Activated naive CD4-positive, alpha-beta T cell treated with anti-CD3 and anti-CD28 coated beads for 36 hours (primary cell): ENCODE measurements at regions of chr21 and their contacts with region 1.

Region 1: GRCh38 chr21:44299458-44300261 is at the start of gene PFKL:
- DNase-seq: peak; percentile 64
- H3K4me3 Mint-ChIP-seq: peak within 1 kb of the TSS; percentile 78
- H3K27ac Mint-ChIP-seq: peak within 1 kb of the TSS; percentile 87
- H3K4me1 Mint-ChIP-seq: peaks cover 54% of the 10 kb centered on the region
- H3K27me3 Mint-ChIP-seq: no peaks in the 10 kb centered on the region
- total RNA-seq, gene PFKL: 166 to 171 TPM

Region 2: GRCh38 chr21:44353191-44353970 is 53.7 kb after region 1 on chr21 and contains the start of gene TRPM2:
- CTCF ChIA-PET with region 1: interaction called, 4 read pairs
- intact Hi-C with region 1: loop called (anchors 5 kb)
- DNase-seq: peak; percentile 48
- H3K4me3 Mint-ChIP-seq: peak within 1 kb of the TSS; percentile 40
- H3K27ac Mint-ChIP-seq: peak within 1 kb of the TSS; percentile 44
- H3K4me1 Mint-ChIP-seq: peaks cover 49% of the 10 kb centered on the region
- H3K27me3 Mint-ChIP-seq: peaks cover 4% of the 10 kb centered on the region
- total RNA-seq, gene TRPM2: 2.5 to 3.5 TPM

Region 3: DNA sequence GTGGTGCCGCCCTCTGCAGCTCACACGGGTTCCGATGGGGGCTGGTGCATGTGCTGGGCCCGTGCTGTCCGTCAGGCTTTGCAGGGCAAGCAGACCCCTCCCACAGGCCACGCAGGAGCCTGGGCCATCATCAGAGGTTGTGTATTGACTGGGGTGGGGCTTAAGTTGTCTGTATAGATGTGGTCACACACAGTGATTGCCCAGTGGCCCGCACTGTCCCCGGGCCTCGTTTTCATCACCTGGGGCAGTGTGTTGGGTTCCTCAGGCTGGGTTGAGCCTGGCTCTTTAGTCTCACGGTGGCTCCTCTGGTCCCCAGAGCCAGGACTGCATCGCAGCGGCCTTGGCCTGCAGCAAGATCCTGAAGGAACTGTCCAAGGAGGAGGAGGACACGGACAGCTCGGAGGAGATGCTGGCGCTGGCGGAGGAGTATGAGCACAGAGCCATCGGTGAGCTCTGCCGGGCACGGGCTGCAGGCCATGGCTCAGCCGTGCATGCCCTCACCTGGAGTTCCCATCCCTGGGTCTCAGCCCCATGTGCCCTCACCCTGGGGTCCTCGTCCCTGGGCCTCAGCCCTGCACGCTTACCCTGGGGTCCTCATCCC is 97.9 kb after region 1 on chr21:
- CTCF ChIA-PET with region 1: no interaction called
- intact Hi-C with region 1: no loop called
- DNase-seq: no peak
- H3K4me3 Mint-ChIP-seq: no peak overlapping the region
- H3K27ac Mint-ChIP-seq: no peak overlapping the region
- H3K4me1 Mint-ChIP-seq: no peaks in the 10 kb centered on the region
- H3K27me3 Mint-ChIP-seq: no peaks in the 10 kb centered on the region

Region 4: GRCh38 chr21:44454747-44455523 is 155.3 kb after region 1 on chr21 and contains the start of gene LRRC3:
- CTCF ChIA-PET with region 1: no interaction called
- intact Hi-C with region 1: loop called (anchors 10 kb)
- DNase-seq: peak; percentile 89
- H3K4me3 Mint-ChIP-seq: peak within 1 kb of the TSS; percentile 73
- H3K27ac Mint-ChIP-seq: no peak within 1 kb of the TSS
- H3K4me1 Mint-ChIP-seq: no peaks in the 10 kb centered on the region
- H3K27me3 Mint-ChIP-seq: peaks cover 14% of the 10 kb centered on the region
- total RNA-seq, gene LRRC3: 2.5 to 2.8 TPM

Region 5: DNA sequence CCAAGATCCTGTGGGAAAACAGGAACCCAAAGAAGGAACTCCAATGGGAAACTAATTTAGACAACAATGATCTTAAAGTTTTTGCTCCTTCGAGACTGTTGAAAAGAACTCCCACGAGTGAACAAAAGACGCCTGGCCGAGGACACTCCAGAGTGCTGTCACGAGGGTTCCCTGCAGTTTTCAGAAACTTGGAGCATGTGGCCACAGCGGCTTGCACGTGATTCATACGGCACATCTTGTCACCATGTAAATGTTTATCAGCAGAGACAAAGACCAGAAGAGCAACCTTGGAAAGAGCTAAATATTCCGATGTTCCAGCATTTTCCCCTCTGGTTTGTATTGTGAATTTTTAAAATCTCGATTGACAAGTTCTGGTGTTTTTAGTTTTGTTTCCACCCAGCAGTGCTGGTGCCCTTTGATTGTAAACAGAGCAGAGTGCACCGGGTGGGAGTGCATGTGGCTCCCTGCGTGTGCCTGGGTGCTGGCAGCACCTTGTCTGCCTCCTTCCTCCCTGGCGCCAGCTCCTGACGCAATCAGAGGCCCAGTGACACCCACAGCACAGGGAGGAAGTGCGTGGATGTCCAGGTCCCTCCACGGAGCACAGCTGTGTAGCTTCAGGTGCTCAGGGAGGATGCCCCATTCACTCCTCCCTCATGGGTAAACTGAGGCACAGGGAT is 178.6 kb after region 1 on chr21:
- CTCF ChIA-PET with region 1: no interaction called
- intact Hi-C with region 1: loop called (anchors 5 kb)
- DNase-seq: no peak
- H3K4me3 Mint-ChIP-seq: no peak overlapping the region
- H3K27ac Mint-ChIP-seq: no peak overlapping the region
- H3K4me1 Mint-ChIP-seq: no peaks in the 10 kb centered on the region
- H3K27me3 Mint-ChIP-seq: no peaks in the 10 kb centered on the region

Region 6: GRCh38 chr21:44666401-44667320 is 367.0 kb after region 1 on chr21 and contains the start of gene KRTAP12-2:
- CTCF ChIA-PET with region 1: no interaction called
- intact Hi-C with region 1: no loop called
- DNase-seq: no peak
- H3K4me3 Mint-ChIP-seq: no peak within 1 kb of the TSS
- H3K27ac Mint-ChIP-seq: no peak within 1 kb of the TSS
- H3K4me1 Mint-ChIP-seq: no peaks in the 10 kb centered on the region
- H3K27me3 Mint-ChIP-seq: no peaks in the 10 kb centered on the region
- total RNA-seq, gene KRTAP12-2: not detected